ENCODE measurements at regions of chr5 and their contacts with region 1.

Region 1: GRCh38 chr5:43066799-43067741 is 27.0 kb upstream of the ANXA2R start:
- DNase-seq: peak; percentile 78
- H3K4me3 Mint-ChIP-seq: peak overlapping the region; percentile 99
- H3K27ac Mint-ChIP-seq: peak overlapping the region; percentile 100
- H3K4me1 Mint-ChIP-seq: peaks cover 47% of the 10 kb centered on the region
- H3K27me3 Mint-ChIP-seq: peaks cover 3% of the 10 kb centered on the region

Region 2: GRCh38 chr5:42908509-42909488 is 158.3 kb before region 1 on chr5:
- intact Hi-C with region 1: loop called (anchors 1 kb)
- DNase-seq: peak; percentile 84
- H3K4me3 Mint-ChIP-seq: peak overlapping the region; percentile 81
- H3K27ac Mint-ChIP-seq: peak overlapping the region; percentile 50
- H3K4me1 Mint-ChIP-seq: peaks cover 12% of the 10 kb centered on the region
- H3K27me3 Mint-ChIP-seq: peaks cover 26% of the 10 kb centered on the region

Region 3: DNA sequence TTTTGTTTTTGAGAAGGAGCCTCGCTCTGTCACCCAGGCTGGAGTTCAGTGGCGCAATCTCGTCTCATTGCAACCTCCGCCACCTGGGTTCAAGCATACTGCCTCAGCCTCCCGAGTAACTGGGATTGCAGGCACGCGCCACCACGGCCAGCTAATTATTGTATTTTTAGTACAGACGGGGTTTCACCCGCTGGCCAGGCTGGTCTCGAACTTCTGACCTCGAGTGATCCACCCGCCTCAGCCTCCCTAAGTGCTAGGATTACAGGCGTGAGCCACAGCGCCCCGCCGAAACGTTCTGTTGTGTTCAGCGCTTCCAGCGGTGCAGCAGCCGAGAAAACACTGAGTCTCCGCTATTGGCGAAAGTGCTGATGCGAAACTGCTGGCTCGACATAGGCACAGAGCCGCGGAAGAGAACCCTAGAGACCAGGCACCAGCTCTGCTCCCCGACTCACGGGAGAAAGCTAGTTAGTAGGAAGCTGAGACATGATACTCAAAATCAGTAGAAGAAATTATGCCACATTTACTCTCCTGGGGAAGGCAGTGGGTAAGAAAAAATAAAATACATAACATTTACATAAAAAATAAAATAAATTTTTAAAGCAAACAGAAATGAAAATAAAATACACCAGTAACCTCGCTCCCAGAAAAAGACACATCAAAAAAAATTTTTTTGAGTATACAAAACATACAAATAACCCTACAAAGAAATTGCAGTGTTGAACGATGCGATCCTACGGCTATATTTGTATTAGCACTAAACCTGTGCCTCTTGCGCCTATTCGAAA is 58.5 kb before region 1 on chr5:
- intact Hi-C with region 1: loop called (anchors 1 kb)
- DNase-seq: peak; percentile 86
- H3K4me3 Mint-ChIP-seq: peak overlapping the region; percentile 90
- H3K27ac Mint-ChIP-seq: peak overlapping the region; percentile 96
- H3K4me1 Mint-ChIP-seq: peaks cover 41% of the 10 kb centered on the region
- H3K27me3 Mint-ChIP-seq: no peaks in the 10 kb centered on the region

Region 4: DNA sequence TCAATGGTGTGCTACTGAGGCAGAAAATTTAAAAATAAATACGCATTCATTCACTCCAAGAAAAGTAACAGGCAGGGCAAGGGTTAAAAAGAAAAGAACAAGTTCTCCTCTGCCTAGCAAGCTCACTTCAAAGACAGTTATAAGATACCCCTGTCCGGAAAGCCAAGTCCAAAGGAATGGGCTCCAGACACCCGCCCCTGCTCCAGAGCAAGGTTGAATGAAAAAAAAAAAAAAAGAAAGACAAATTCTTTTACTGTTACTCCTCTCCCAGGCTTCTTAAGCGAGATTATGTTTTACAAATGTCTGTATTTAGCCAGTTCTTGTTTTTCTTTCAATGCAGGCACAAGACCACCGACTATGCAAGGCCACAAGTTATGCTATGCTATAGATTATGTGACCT is 17.8 kb before region 1 on chr5:
- intact Hi-C with region 1: no loop called
- DNase-seq: no peak
- H3K4me3 Mint-ChIP-seq: no peak overlapping the region
- H3K27ac Mint-ChIP-seq: no peak overlapping the region
- H3K4me1 Mint-ChIP-seq: peaks cover 12% of the 10 kb centered on the region
- H3K27me3 Mint-ChIP-seq: peaks cover 1% of the 10 kb centered on the region

Region 5: DNA sequence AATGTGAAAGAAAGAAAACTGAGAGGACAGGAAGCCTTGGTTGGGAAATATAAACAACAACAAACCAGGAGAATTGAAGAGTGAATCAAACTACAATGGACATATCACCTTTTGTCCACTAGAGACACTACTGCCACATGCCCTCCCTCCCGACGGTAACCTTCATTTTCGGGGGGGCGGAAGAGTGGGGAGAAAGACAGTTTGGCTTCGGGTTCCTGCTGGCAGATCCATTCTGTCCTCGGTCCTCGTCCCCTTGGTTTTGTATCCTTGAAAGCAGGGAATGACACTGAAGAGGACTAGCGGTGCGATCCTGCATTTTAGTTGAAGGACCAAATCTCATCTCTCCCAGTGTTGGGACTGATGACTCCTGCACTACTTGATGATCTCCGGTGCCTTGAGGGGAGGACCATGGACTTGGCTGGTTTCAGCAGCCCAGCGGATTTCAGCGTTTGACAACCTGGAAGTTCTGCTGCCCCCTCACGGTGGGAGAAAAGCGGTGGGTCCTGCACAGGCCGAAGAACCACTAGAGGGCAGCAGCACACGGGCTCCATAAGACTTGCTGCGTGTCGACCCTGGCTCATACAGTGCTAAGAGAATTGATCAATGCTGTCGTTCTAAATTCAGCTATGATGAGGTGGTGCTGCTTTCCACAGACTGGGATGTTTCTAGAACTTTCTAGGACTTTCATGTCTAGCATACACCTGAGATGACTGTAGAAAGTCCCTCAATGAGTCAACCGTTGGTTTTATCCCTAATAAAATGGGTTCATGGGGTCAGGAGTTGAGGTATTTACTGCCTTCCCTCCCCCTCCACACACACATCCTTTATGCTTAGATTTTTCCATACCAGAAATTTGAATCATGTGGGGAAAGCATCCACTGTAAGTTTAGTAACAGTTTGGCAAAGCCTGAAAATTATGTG is 38.6 kb after region 1 on chr5:
- intact Hi-C with region 1: loop called (anchors 1 kb)
- DNase-seq: peak; percentile 83
- H3K4me3 Mint-ChIP-seq: peak overlapping the region; percentile 86
- H3K27ac Mint-ChIP-seq: peak overlapping the region; percentile 89
- H3K4me1 Mint-ChIP-seq: peaks cover 41% of the 10 kb centered on the region
- H3K27me3 Mint-ChIP-seq: no peaks in the 10 kb centered on the region

Region 6: GRCh38 chr5:43305948-43306565 is 239.0 kb after region 1 on chr5:
- intact Hi-C with region 1: loop called (anchors 2 kb)
- DNase-seq: no peak
- H3K4me3 Mint-ChIP-seq: peak overlapping the region; percentile 33
- H3K27ac Mint-ChIP-seq: peak overlapping the region; percentile 61
- H3K4me1 Mint-ChIP-seq: peaks cover 87% of the 10 kb centered on the region
- H3K27me3 Mint-ChIP-seq: no peaks in the 10 kb centered on the region

Region 7: GRCh38 chr5:43556857-43557542 is 489.9 kb after region 1 on chr5 and contains the start of gene PAIP1:
- intact Hi-C with region 1: loop called (anchors 2 kb)
- DNase-seq: peak; percentile 83
- H3K4me3 Mint-ChIP-seq: peak within 1 kb of the TSS; percentile 92
- H3K27ac Mint-ChIP-seq: peak within 1 kb of the TSS; percentile 93
- H3K4me1 Mint-ChIP-seq: peaks cover 10% of the 10 kb centered on the region
- H3K27me3 Mint-ChIP-seq: no peaks in the 10 kb centered on the region
- total RNA-seq, gene PAIP1: 59.0 and 60.8 TPM in 2 replicates